ENCODE measurements at regions of chr3 and their contacts with region 1.

Region 1: DNA sequence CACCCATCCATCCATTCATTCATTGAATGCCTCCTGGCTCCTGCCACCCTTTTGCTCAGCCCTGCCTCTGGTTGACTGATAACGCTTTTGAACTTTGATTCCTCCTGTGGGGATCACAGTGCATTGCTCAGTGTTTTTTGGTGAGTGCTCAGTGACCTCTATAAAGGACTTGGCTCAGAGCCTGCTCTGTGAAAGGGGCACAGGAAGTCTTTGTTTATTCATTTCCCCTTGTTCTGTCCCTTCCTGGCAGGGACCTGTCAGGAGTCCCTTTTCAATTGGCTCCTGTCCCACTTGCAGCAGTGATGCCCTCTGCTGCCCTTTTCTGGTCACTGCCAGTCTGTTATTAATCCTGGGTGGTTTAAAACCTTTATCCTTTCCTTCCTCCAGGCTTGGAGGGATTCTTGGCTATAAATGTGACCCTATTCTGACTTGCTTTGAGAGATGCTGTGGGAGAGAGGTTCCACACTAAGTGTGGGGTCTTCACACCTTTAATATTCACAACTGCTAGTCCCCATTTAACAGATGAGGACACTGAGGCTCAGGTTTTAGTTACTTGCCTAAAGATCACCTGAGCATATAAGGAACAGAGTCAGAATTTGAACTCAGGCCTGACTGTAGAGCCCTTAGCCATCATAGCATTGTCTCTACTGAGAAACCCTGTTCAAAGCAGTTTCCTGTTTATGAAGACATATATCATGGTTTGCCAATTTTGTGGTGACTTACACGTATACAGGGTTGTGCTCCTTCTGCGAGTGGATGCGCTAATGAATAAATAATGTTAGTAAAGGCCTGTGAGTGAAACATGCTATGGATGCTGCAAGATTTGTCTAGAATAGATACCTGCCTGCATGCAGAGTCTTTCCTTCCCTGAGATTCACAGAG is 23.2 kb upstream of the TATDN2 start:
- DNase-seq: peak; percentile 88
- H3K4me3 ChIP-seq: no peak overlapping the region
- H3K27ac ChIP-seq: peak overlapping the region; percentile 84
- H3K4me1 ChIP-seq: peaks cover 86% of the 10 kb centered on the region
- CTCF ChIP-seq: peak; percentile 96

Region 2: DNA sequence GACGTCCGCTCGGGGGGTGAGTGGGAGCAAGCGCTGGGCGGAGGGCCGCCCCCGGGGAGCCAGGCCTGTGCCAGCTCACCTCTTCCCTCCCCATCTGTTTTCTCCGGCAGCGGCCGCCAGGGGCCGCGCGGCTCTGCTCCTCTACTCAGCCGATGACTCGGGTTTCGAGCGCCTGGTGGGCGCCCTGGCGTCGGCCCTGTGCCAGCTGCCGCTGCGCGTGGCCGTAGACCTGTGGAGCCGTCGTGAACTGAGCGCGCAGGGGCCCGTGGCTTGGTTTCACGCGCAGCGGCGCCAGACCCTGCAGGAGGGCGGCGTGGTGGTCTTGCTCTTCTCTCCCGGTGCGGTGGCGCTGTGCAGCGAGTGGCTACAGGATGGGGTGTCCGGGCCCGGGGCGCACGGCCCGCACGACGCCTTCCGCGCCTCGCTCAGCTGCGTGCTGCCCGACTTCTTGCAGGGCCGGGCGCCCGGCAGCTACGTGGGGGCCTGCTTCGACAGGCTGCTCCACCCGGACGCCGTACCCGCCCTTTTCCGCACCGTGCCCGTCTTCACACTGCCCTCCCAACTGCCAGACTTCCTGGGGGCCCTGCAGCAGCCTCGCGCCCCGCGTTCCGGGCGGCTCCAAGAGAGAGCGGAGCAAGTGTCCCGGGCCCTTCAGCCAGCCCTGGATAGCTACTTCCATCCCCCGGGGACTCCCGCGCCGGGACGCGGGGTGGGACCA is 292.0 kb before region 1 on chr3:
- CTCF ChIA-PET with region 1: no interaction called
- POLR2A ChIA-PET with region 1: no interaction called
- intact Hi-C with region 1: loop called (anchors 10 kb)
- DNase-seq: peak; percentile 87
- H3K4me3 ChIP-seq: peak overlapping the region; percentile 71
- H3K27ac ChIP-seq: peak overlapping the region; percentile 76
- H3K4me1 ChIP-seq: peaks cover 22% of the 10 kb centered on the region
- CTCF ChIP-seq: peak; percentile 85

Region 3: DNA sequence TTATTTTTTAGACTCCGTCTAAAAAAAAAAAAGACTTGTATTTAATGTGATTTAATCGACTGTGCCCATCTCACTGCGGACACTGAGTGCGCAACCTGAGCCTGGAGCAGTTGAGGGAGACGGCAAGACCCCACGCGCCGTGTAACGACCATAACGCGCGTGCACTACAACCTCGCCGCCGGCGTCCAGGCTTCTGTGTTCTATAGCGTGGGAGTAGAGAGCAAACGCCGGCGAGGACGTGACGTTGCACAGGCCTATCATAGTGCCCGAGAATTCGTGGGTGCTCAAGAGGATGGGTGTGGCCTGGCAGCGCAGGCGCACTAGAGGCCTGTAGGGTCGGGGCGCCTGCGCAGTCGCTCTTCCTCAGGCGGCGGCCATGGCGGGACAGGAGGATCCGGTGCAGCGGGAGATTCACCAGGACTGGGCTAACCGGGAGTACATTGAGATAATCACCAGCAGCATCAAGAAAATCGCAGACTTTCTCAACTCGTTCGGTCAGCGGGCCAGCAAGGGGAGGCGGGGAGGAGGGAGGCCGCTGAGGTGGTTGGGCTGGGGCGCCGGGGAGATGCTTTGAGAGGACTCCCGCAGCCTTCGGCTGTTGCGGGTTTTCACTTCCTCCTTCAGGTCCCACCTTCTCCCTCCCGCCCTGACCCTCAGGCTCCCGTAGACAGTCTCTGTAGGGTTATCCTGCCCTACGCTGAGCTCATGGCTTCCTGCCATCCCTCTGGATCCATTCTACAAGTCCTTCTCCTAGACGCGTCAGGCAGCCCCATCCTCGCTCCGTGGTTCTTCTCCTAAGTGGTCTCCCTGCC is 109.5 kb before region 1 on chr3 and contains the start of gene BRK1:
- CTCF ChIA-PET with region 1: no interaction called
- POLR2A ChIA-PET with region 1: interaction called, 7 read pairs
- intact Hi-C with region 1: loop called (anchors 1 kb)
- DNase-seq: peak; percentile 98
- H3K4me3 ChIP-seq: peak within 1 kb of the TSS; percentile 97
- H3K27ac ChIP-seq: peak within 1 kb of the TSS; percentile 61
- H3K4me1 ChIP-seq: peaks cover 20% of the 10 kb centered on the region
- CTCF ChIP-seq: no peak
- total RNA-seq, gene BRK1: 67.5 and 80.4 TPM in 2 replicates

Region 4: GRCh38 chr3:10173926-10174435 is 51.0 kb before region 1 on chr3:
- CTCF ChIA-PET with region 1: no interaction called
- POLR2A ChIA-PET with region 1: interaction called, 4 read pairs
- intact Hi-C with region 1: loop called (anchors 1 kb)
- DNase-seq: no peak
- H3K4me3 ChIP-seq: no peak overlapping the region
- H3K27ac ChIP-seq: peak overlapping the region; percentile 4
- H3K4me1 ChIP-seq: peaks cover 47% of the 10 kb centered on the region
- CTCF ChIP-seq: no peak

Region 5: GRCh38 chr3:10213156-10213792 is 11.8 kb before region 1 on chr3:
- CTCF ChIA-PET with region 1: interaction called, 6 read pairs
- POLR2A ChIA-PET with region 1: interaction called, 31 read pairs
- intact Hi-C with region 1: no loop called
- DNase-seq: peak; percentile 68
- H3K4me3 ChIP-seq: peak overlapping the region; percentile 5
- H3K27ac ChIP-seq: peak overlapping the region; percentile 16
- H3K4me1 ChIP-seq: peaks cover 50% of the 10 kb centered on the region
- CTCF ChIP-seq: no peak